GM10248 (cell line): ENCODE measurements at regions of chr2 and their contacts with region 1.

Region 1: GRCh38 chr2:201639205-201639604 is 4.1 kb downstream of the TMEM237 start:
- DNase-seq: no peak
- CTCF ChIP-seq: no peak

Region 2: DNA sequence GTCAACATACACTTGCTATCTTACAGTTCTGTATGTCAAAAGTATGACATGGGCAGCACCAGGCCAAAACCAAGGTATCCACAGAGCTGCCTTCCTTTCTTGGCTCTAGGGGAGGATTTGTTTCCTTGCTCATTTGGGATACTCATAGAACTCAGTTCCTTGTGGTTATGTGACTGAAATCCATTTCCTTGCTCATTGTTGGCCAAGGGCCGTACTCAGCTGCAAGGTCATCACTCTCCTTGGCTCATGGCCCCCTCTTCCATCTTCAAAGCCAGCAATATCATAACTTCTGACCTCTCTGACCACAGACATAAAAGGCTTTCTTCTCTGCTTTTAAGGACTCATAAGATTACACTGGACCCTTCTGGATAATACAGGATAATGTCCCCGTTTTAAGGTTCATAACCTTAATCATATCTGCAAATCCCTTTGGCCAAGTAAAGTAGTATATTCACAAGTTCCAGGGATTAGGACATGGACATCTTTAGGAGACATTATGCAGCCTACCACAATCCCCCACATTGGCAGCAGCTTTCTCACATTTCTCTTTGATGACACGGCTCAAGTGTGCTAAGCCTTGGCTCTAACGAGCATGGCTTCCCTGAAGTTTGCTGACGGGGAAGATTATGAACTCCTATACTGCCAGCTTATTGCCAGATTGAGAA is 16.8 kb before region 1 on chr2:
- CTCF ChIA-PET with region 1: interaction called, 13 read pairs
- POLR2A ChIA-PET with region 1: no interaction called
- DNase-seq: no peak
- CTCF ChIP-seq: no peak

Region 3: GRCh38 chr2:202005272-202005887 is 366.2 kb after region 1 on chr2:
- CTCF ChIA-PET with region 1: no interaction called
- POLR2A ChIA-PET with region 1: no interaction called
- DNase-seq: peak; percentile 58
- CTCF ChIP-seq: no peak